ENCODE measurements at regions of chr9 and their contacts with region 1.

Region 1: GRCh38 chr9:131125128-131126058 is at the start of gene NUP214:
- DNase-seq: peak; percentile 96 to 98
- ATAC-seq: peak; percentile 99 to 100
- H3K4me3 ChIP-seq: peak within 1 kb of the TSS; percentile 88
- H3K27ac ChIP-seq: peak within 1 kb of the TSS; percentile 81 to 90
- H3K4me1 ChIP-seq: peaks cover 6% of the 10 kb centered on the region; the same call in 2 of the 3 replicates
- CTCF ChIP-seq: no peak
- EP300 ChIP-seq: no peak
- POLR2A ChIP-seq: peak; percentile 87
- RAD21 ChIP-seq: no peak
- polyA plus RNA-seq, gene NUP214: 14.4 and 25.8 TPM in 2 replicates

Region 2: DNA sequence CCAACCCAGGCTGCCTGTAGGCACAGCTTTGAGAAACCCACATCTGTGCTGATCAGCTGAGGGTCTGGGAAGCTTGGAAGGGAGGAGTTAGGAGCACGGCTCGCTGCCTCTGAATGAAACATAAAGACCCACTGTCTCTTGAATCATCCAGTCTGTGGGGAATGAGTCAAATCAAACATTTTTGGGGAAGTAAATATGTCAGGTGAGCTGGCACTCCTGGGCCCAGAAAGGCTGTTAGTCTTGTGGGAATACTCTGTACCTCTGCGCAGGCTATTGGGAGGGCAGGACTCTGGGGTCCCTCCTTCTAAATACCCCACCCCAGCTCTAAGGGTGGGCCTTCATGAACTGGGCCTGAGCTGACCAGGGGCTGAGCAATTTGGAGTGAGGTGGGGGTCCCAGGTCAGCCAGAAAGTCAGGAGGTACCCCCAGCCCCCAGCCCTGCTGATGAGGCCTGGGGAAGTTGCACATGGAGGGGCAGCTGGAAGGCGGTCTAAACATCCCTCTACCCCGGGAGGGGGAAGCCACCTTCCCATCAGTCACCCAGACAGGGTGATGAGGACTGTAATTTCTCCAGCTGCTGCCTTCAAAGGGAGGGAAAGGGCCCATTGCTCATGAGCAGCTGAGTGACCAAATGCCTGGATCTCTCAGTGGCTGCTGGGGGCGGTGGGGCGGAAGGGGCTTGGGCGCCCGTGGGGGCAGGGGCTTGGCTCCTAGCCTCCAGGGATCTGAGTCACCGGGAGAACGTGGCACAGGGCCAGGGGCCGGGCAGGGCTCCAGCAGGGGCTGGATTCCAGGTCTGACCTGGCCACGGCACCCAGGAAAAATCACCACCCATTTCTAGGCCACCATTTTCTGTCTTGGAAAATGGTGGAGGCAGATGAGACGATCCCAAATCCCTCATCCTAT is 197.1 kb before region 1 on chr9:
- CTCF ChIA-PET with region 1: no interaction called
- POLR2A ChIA-PET with region 1: no interaction called
- DNase-seq: peak; percentile 81 to 83
- ATAC-seq: peak; percentile 60 to 72
- H3K4me3 ChIP-seq: peak overlapping the region; percentile 18; the same call in 2 of the 3 replicates
- H3K27ac ChIP-seq: peak overlapping the region; percentile 82 to 93
- H3K4me1 ChIP-seq: peaks cover 38% of the 10 kb centered on the region
- CTCF ChIP-seq: no peak
- EP300 ChIP-seq: no peak
- POLR2A ChIP-seq: no peak
- RAD21 ChIP-seq: no peak

Region 3: DNA sequence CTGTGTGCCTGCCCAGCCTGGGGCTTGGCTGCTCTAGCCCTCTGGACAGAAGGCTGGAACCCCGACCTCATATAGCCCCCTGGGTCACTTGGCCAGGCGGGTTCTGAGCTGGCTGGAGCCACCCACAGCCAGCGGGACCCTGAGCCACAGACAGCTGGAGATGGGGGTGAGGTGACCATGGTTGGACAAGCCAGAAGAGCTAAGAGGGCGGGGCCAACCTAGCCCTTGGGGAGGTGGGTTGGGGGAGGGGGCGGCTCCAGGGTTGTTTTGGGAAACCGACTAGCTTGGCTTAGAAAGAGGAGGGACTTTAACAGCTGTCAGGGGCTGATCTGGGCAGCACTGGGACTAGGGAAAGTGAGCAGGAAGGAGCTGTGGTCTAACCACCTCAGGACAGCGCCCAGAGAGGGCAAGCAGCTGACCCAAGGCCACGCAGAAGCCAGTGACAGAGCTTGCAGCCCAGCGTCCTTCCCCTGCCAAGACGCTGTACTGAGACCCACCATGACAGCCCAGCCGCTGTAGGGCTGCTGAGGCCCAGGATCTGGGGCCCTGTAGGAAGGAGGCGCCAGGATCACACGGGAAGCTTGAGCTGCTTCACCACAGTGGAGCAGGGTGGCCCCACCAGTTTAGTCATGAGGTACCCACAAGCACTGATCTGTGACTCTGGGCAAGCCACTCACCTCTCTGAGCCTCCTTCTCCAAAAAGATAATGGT is 26.8 kb before region 1 on chr9:
- CTCF ChIA-PET with region 1: interaction called, 3 read pairs
- POLR2A ChIA-PET with region 1: interaction called, 11 read pairs
- DNase-seq: no peak
- ATAC-seq: no peak
- H3K4me3 ChIP-seq: no peak overlapping the region
- H3K27ac ChIP-seq: no peak overlapping the region
- H3K4me1 ChIP-seq: 0 out of 3 replicates have a peak, but pooled peaks cover 7% of the 10 kb centered on the region
- CTCF ChIP-seq: no peak
- EP300 ChIP-seq: no peak
- POLR2A ChIP-seq: no peak
- RAD21 ChIP-seq: no peak

Region 4: GRCh38 chr9:131111854-131112311 is 13.5 kb before region 1 on chr9:
- CTCF ChIA-PET with region 1: interaction called, 3 read pairs
- POLR2A ChIA-PET with region 1: interaction called, 11 read pairs
- DNase-seq: no peak
- ATAC-seq: no peak
- H3K4me3 ChIP-seq: no peak overlapping the region
- H3K27ac ChIP-seq: peak overlapping the region in 1 of 2 experiments; percentile 33; a peak in 1 of 6 replicates
- H3K4me1 ChIP-seq: 0 out of 3 replicates have a peak, but pooled peaks cover 6% of the 10 kb centered on the region
- CTCF ChIP-seq: no peak
- EP300 ChIP-seq: no peak
- POLR2A ChIP-seq: no peak
- RAD21 ChIP-seq: no peak

Region 5: DNA sequence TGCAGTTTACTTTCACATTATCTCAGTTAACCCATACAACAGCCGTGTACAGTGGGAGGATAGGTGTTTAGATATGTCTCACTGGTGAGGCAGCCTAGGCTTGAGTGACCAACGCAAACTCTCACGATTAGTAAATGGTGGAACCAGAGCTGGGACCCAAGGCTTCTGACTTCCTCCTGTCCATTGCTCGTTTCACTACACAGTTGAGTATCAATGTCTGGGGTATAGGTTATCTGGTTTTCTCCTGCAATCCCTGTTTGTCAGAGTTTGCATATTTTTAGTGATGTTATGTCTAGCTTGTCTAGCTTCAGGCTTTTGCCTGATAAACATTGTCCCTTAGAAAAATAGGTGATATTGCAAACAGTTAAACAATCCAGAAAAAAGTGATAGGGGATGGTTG is 62.6 kb after region 1 on chr9:
- CTCF ChIA-PET with region 1: no interaction called
- POLR2A ChIA-PET with region 1: no interaction called
- DNase-seq: no peak
- ATAC-seq: no peak
- H3K4me3 ChIP-seq: no peak overlapping the region
- H3K27ac ChIP-seq: no peak overlapping the region
- H3K4me1 ChIP-seq: no peaks in the 10 kb centered on the region
- CTCF ChIP-seq: no peak
- EP300 ChIP-seq: no peak
- POLR2A ChIP-seq: no peak
- RAD21 ChIP-seq: no peak

Region 6: DNA sequence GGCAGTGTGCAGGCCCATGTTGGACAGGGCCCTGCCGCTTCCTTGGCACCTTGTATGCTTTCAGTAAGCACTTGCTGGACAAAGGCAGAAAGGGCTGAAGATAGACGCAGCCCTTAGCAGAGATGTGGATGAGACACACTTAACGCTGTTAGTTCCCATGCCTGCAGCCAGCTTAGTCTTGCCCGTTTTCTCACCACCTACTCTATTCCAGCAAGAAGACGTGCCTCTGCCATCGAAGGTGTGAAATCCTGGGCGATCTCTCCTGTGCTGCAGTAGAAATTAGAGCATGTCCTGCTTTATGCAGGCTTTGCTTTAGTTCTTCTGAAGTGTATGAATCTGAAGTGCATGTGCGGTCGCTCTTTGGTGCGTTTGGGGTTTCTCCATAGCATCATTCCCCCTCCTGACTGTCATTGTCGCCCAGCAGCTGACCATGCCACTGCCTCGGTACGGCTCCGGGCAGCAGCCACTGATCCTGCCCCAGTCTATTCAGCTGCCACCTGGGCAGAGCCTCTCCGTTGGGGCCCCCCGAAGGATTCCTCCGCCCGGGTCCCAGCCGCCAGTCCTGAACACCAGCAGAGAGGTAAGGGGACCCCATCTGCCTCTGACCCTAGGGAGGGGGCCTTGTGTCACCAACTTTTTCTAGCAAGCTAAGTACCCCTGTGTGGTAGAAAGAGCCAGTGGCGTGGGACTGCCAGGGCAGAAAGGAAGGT is 365.8 kb after region 1 on chr9:
- CTCF ChIA-PET with region 1: no interaction called
- POLR2A ChIA-PET with region 1: no interaction called
- DNase-seq: no peak
- ATAC-seq: no peak
- H3K4me3 ChIP-seq: no peak overlapping the region
- H3K27ac ChIP-seq: no peak overlapping the region
- H3K4me1 ChIP-seq: no peaks in the 10 kb centered on the region
- CTCF ChIP-seq: no peak
- EP300 ChIP-seq: no peak
- POLR2A ChIP-seq: no peak
- RAD21 ChIP-seq: no peak